Endothelial cell of umbilical vein (primary cell): ENCODE measurements at regions of chr1 and their contacts with region 1.

Region 1: GRCh38 chr1:213947200-213947775 is 40.5 kb upstream of the PROX1 start:
- DNase-seq: no peak
- H3K4me3 ChIP-seq: no peak overlapping the region
- H3K27ac ChIP-seq: no peak overlapping the region
- H3K4me1 ChIP-seq: no peaks in the 10 kb centered on the region
- H3K27me3 ChIP-seq: peaks cover 0 to 4% of the 10 kb centered on the region in 2 experiments
- CTCF ChIP-seq: no peak
- POLR2A ChIP-seq: no peak

Region 2: GRCh38 chr1:213783893-213784292 is 163.4 kb before region 1 on chr1:
- CTCF ChIA-PET with region 1: no interaction called
- POLR2A ChIA-PET with region 1: interaction called, 11 read pairs
- dilution Hi-C with region 1: no loop called
- intact Hi-C with region 1: no loop called
- DNase-seq: no peak
- H3K4me3 ChIP-seq: no peak overlapping the region
- H3K27ac ChIP-seq: no peak overlapping the region
- H3K4me1 ChIP-seq: no peaks in the 10 kb centered on the region
- H3K27me3 ChIP-seq: no peaks in the 10 kb centered on the region
- CTCF ChIP-seq: no peak
- POLR2A ChIP-seq: no peak